Aorta (tissue), 5 donors: ENCODE measurements at regions of chr12 and their contacts with region 1.

Region 1: DNA sequence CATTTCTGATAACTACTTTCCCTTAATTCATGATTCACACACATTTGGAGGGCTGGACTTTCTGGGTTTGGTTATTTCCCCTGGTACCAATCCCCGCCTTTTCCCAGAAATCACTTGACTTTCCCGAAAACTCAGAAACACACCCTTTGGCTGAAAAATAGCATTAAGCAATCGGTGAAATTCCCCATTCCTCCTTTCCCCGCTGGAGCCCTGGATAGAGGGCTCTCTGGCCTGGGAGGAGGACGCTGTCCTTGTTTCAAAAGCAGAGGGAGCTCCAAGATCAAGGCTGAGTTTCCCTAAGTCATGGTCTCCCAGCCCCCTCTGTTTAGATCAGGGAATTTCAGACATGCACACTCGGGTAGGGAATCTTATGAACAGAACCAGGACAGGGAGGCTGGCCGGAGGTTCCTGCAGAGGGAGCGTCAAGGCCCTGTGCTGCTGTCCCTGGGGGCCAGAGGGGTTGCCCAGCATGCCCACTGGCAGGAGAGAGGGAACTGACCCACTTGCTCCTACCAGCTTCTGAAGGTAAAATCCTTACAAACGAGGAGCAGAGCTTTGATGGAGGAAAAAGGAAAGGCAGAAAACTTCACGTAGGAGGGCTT is at the start of gene C1S:
- DNase-seq: peak; percentile 86 to 87
- ATAC-seq: peak; percentile 96
- H3K4me3 ChIP-seq: peak within 1 kb of the TSS in 1 of 2 donors; percentile 34
- H3K27ac ChIP-seq: peak within 1 kb of the TSS in 1 of 2 donors; percentile 71
- H3K4me1 ChIP-seq: no peaks in the 10 kb centered on the region
- H3K27me3 ChIP-seq: no peaks in the 10 kb centered on the region
- total RNA-seq, gene C1S: 490 to 1,087 TPM

Region 2: DNA sequence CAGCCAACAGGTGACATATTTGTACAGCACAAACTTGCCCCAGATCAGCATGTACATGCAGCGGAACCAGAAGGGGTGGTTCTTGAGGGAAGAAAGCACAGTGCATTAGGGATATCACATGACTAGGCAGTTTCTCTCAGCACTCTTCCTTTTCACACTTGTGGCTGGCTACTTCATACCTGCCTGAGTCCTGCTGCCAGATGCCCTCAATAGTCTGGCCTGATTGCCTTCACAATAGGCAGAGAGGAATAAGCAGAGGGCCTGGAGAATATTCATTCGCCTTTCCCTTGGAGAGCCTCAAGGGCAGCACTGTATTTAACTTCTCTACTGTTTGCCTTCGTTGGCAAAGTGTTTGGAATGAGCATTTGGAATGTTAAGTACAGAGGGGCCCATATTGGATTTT is 81.8 kb before region 1 on chr12:
- intact Hi-C with region 1: no loop called
- DNase-seq: no peak
- ATAC-seq: no peak
- H3K4me3 ChIP-seq: no peak overlapping the region
- H3K27ac ChIP-seq: no peak overlapping the region
- H3K4me1 ChIP-seq: no peaks in the 10 kb centered on the region
- H3K27me3 ChIP-seq: no peaks in the 10 kb centered on the region

Region 3: GRCh38 chr12:7092229-7092985 is 32.0 kb after region 1 on chr12 and contains the start of gene C1R:
- intact Hi-C with region 1: loop called (anchors 1 to 2 kb)
- DNase-seq: peak; percentile 89 to 92
- ATAC-seq: peak; percentile 86
- H3K4me3 ChIP-seq: peak within 1 kb of the TSS; percentile 44 to 51
- H3K27ac ChIP-seq: peak within 1 kb of the TSS in 1 of 2 donors; percentile 65
- H3K4me1 ChIP-seq: no peaks in the 10 kb centered on the region
- H3K27me3 ChIP-seq: no peaks in the 10 kb centered on the region
- total RNA-seq, gene C1R: 769 to 1,570 TPM